IMR-90 (cell line): ENCODE measurements at regions of chr10 and their contacts with region 1.

Region 1: DNA sequence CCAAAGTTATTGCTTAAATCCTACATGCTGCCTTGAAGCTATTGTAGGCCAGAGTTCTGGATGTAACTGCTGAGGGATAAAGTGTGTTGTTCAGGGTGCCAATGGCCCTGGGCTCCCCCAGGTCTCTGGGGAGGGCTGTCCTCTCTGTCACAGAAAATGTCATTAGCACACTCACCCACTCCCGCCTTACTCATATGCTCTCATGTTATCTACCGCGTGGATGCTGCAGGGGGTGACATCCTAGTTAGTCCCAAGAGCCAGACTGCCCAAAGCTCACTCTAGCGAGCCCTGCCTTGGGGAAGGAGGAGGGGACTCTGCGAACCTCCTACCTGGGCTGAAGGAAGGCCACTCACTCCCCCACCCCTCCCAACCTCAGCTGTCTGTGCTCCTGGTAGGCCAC is 122.5 kb downstream of the FRMD4A start:
- DNase-seq: no peak
- ATAC-seq: no peak
- H3K4me3 ChIP-seq: no peak overlapping the region
- H3K27ac ChIP-seq: no peak overlapping the region
- H3K4me1 ChIP-seq: no peaks in the 10 kb centered on the region
- H3K27me3 ChIP-seq: peaks cover 32% of the 10 kb centered on the region
- CTCF ChIP-seq: no peak
- POLR2A ChIP-seq: no peak
- RAD21 ChIP-seq: no peak

Region 2: GRCh38 chr10:12876266-12876665 is 1332.0 kb before region 1 on chr10:
- CTCF ChIA-PET with region 1: no interaction called
- POLR2A ChIA-PET with region 1: no interaction called
- dilution Hi-C with region 1: no loop called
- in situ Hi-C with region 1: no loop called
- intact Hi-C with region 1: no loop called
- DNase-seq: no peak
- ATAC-seq: no peak
- H3K4me3 ChIP-seq: no peak overlapping the region
- H3K27ac ChIP-seq: no peak overlapping the region
- H3K4me1 ChIP-seq: peaks cover 2% of the 10 kb centered on the region; the same call in 1 of the 2 replicates
- H3K27me3 ChIP-seq: peaks cover 31% of the 10 kb centered on the region
- CTCF ChIP-seq: no peak
- POLR2A ChIP-seq: no peak
- RAD21 ChIP-seq: no peak

Region 3: DNA sequence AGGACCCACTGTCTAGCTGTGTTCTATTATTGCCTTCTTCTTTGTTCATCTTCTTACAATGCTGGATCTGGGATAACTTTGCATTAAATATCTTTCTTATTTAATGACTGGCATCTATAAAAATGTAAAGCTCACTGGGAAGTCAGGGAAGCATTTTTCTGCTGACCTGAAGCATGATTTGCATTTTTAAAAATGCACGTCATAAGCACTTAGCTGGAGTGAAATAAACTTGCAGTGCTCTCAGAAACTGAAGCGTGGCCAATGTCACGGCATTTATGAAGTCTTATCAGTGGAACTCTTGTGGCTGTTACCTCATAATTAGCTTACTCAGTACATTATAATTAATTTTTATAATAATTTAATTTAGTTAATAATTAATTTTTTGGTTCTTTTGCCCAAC is 63.4 kb after region 1 on chr10:
- CTCF ChIA-PET with region 1: no interaction called
- POLR2A ChIA-PET with region 1: interaction called, 10 read pairs
- dilution Hi-C with region 1: no loop called
- in situ Hi-C with region 1: no loop called
- intact Hi-C with region 1: no loop called
- DNase-seq: peak; percentile 46
- ATAC-seq: peak; percentile 49
- H3K4me3 ChIP-seq: no peak overlapping the region
- H3K27ac ChIP-seq: no peak overlapping the region
- H3K4me1 ChIP-seq: peaks cover 2% of the 10 kb centered on the region
- H3K27me3 ChIP-seq: peaks cover 40% of the 10 kb centered on the region
- CTCF ChIP-seq: no peak
- POLR2A ChIP-seq: no peak
- RAD21 ChIP-seq: no peak

Region 4: GRCh38 chr10:14556285-14556956 is 348.2 kb after region 1 on chr10:
- CTCF ChIA-PET with region 1: no interaction called
- POLR2A ChIA-PET with region 1: no interaction called
- dilution Hi-C with region 1: no loop called
- in situ Hi-C with region 1: no loop called
- intact Hi-C with region 1: no loop called
- DNase-seq: peak; percentile 23
- ATAC-seq: peak; percentile 26
- H3K4me3 ChIP-seq: no peak overlapping the region
- H3K27ac ChIP-seq: peak overlapping the region; percentile 18; the same call in 1 of the 2 replicates
- H3K4me1 ChIP-seq: peaks cover 38% of the 10 kb centered on the region
- H3K27me3 ChIP-seq: no peaks in the 10 kb centered on the region
- CTCF ChIP-seq: 0 out of 2 replicates have a peak, but pooled peaks have one; percentile 10
- POLR2A ChIP-seq: no peak
- RAD21 ChIP-seq: peak; percentile 22; the same call in 1 of the 2 replicates

Region 5: DNA sequence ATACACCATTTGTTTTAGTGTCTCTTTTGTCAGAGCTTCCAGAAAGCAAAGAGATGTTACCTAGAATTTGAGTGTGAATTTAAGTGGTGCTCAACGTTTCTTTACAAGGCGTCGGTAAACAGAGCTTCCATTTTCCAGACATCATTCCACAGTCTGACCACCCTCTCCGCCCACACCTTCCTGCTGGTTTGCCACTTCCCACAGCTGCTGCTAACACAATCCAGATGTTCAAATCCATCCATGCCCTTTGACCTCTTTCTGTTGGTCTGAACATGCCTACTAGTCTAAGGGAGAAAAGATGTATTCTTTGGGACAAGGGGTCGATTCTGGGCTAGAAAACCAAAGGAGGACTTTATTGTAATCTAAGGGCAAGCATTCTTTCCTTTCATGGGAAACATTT is 480.4 kb after region 1 on chr10:
- CTCF ChIA-PET with region 1: no interaction called
- POLR2A ChIA-PET with region 1: no interaction called
- dilution Hi-C with region 1: no loop called
- in situ Hi-C with region 1: no loop called
- intact Hi-C with region 1: no loop called
- DNase-seq: peak; percentile 89
- ATAC-seq: peak; percentile 80
- H3K4me3 ChIP-seq: no peak overlapping the region
- H3K27ac ChIP-seq: no peak overlapping the region
- H3K4me1 ChIP-seq: peaks cover 1% of the 10 kb centered on the region; the same call in 1 of the 2 replicates
- H3K27me3 ChIP-seq: no peaks in the 10 kb centered on the region
- CTCF ChIP-seq: no peak
- POLR2A ChIP-seq: no peak
- RAD21 ChIP-seq: no peak

Region 6: DNA sequence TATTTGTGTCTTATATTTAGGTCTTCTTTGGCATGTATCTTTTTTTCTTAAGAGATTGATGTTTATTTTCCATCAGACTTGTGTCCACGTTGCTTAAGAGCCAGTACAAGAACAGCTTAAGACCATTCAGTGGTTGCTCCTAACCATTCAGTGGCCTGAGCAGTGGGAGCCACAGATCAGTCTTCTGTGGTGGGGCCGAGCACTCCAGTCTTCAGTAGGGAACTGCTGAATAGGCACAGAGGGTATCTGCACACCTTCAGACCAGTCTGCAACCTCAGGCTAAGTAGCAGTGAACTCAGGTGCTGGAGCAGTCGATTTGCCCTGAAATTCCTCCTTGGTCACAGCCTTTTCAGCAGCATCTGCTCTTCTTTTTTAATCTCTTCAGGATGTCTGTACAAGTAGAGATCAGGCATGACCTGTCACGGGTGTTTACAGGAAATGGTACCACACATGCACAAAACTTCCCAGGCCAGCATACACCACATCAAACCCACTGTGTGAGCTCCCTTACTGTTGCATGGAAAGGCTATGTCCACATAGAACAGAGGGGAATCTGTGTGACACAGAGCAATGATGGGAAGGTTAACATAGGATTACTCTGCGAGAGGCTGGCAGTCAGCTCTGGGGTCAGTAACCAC is 514.9 kb after region 1 on chr10:
- CTCF ChIA-PET with region 1: no interaction called
- POLR2A ChIA-PET with region 1: no interaction called
- dilution Hi-C with region 1: no loop called
- in situ Hi-C with region 1: no loop called
- intact Hi-C with region 1: no loop called
- DNase-seq: no peak
- ATAC-seq: no peak
- H3K4me3 ChIP-seq: no peak overlapping the region
- H3K27ac ChIP-seq: no peak overlapping the region
- H3K4me1 ChIP-seq: no peaks in the 10 kb centered on the region
- H3K27me3 ChIP-seq: peaks cover 9% of the 10 kb centered on the region
- CTCF ChIP-seq: no peak
- POLR2A ChIP-seq: no peak
- RAD21 ChIP-seq: no peak